SK-N-SH (cell line): ENCODE measurements at regions of chr1 and their contacts with region 1.

Region 1: DNA sequence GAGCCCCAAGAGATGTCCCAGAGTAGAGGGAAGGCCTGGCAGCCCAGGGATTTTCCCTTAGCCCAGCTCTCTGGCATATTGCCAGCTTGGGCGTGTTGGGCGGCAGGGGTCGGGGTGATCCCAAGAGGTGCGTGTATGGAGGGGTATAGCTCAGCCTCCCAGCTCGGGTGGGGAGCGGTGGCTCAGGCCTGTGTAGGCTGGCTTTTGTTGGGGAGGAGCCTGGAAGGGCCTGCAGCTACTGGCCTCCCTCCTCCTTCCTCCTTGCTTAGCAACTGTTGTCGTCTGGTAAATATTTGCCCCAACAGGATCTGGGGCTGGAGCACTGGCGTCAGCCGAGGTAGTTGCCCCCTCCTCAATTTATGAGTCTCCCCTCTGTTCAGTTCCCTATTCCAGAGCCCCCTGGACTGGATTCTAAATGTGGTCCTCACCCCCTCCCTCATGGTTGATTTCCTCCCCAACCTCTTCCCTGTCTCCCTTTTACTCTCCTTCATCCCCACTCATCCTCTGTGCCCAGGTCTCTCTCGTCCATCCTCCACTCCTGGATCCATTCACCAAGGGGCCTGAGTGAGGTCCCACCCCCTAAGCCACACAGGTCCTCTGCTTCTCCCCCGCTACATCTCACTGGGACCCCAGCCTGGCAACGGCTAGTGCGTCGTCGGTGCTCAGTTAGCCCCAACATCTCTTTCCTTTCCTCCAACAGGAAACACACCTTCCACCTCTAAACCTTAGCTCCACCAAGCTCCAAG is 10.3 kb upstream of the LMNA start:
- DNase-seq: peak; percentile 81
- H3K4me3 ChIP-seq: no peak overlapping the region
- H3K27ac ChIP-seq: peak overlapping the region; percentile 77 to 99
- H3K4me1 ChIP-seq: peaks cover 58 to 63% of the 10 kb centered on the region in 2 experiments
- H3K27me3 ChIP-seq: no peaks in the 10 kb centered on the region
- CTCF ChIP-seq: no peak
- EP300 ChIP-seq: no peak
- RAD21 ChIP-seq: no peak

Region 2: GRCh38 chr1:156090822-156091188 is 13.4 kb before region 1 on chr1:
- CTCF ChIA-PET with region 1: interaction called, 69 read pairs
- POLR2A ChIA-PET with region 1: no interaction called
- DNase-seq: peak; percentile 80
- H3K4me3 ChIP-seq: peak overlapping the region in 1 of 2 experiments; percentile 27; a peak in 1 of 4 replicates
- H3K27ac ChIP-seq: no peak overlapping the region
- H3K4me1 ChIP-seq: peaks cover 0 to 4% of the 10 kb centered on the region in 2 experiments; a peak in 2 of 4 replicates
- H3K27me3 ChIP-seq: no peaks in the 10 kb centered on the region
- CTCF ChIP-seq: peak; percentile 84
- EP300 ChIP-seq: no peak
- RAD21 ChIP-seq: peak; percentile 91